Esophagus squamous epithelium (tissue), 5 donors: ENCODE measurements at regions of chr1 and their contacts with region 1.

Region 1: GRCh38 chr1:53878492-53879105 is 11.0 kb downstream of the YIPF1 start:
- DNase-seq: no peak
- H3K4me3 ChIP-seq: no peak overlapping the region
- H3K27ac ChIP-seq: no peak overlapping the region
- H3K4me1 ChIP-seq: peaks cover 0 to 2% (median 0%) of the 10 kb centered on the region in 3 donors
- H3K27me3 ChIP-seq: no peaks in the 10 kb centered on the region
- CTCF ChIP-seq: peak; percentile 38 to 65 (median 54)
- POLR2A ChIP-seq: no peak

Region 2: DNA sequence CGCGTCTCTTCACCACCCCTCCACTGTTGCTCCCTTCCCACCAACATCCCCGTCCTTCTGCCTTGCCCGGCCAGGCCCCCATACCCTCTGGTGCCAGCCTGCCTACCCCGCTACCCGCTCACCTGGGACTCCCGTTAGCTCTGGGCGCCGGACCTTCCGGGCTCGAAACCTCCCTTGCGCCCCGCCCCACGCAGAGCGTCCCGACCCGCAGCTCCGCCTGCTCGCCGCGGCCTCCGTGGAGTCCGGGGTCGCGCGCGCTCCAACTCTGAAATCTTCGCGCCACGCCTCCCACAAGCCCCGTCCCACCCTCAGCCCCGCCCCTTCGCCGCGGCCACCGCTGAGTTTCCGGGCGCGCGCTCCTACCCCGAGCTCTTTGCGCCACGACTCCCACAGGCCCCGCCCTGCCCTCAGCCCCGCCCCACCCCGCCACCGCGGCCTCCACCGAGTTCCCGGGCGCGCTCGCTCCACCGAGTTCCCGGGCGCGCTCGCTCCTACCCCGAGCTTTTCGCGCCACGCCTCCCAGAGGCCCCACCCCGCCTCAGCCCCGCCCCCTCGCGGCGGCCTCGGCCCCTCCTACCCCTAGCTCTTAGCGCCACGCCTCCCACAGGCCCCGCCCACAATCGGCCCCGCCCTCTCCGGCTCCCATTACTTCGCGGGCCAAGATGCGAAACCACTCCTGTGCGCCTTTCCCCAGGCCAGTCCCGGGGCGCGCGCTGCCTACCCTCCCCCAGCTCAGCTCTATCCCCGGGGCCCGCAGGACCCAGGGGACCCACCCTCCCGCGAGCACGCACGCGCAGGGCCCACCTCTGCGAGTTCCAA is 67.0 kb after region 1 on chr1 and contains the start of gene IFT25:
- intact Hi-C with region 1: loop called (anchors 5 kb)
- DNase-seq: peak; percentile 87
- H3K4me3 ChIP-seq: peak within 1 kb of the TSS; percentile 79 to 96 (median 84)
- H3K27ac ChIP-seq: peak within 1 kb of the TSS; percentile 91 to 96 (median 94)
- H3K4me1 ChIP-seq: peaks cover 14 to 53% (median 21%) of the 10 kb centered on the region in 3 donors
- H3K27me3 ChIP-seq: no peaks in the 10 kb centered on the region
- CTCF ChIP-seq: peak in 1 of 6 experiments; percentile 15
- POLR2A ChIP-seq: peak in 2 of 4 donors; percentile 77 to 82
- total RNA-seq, gene IFT25: 11.7 to 24.6 (median 17.1) TPM